ENCODE measurements at regions of chr1 and their contacts with region 1.

Region 1: DNA sequence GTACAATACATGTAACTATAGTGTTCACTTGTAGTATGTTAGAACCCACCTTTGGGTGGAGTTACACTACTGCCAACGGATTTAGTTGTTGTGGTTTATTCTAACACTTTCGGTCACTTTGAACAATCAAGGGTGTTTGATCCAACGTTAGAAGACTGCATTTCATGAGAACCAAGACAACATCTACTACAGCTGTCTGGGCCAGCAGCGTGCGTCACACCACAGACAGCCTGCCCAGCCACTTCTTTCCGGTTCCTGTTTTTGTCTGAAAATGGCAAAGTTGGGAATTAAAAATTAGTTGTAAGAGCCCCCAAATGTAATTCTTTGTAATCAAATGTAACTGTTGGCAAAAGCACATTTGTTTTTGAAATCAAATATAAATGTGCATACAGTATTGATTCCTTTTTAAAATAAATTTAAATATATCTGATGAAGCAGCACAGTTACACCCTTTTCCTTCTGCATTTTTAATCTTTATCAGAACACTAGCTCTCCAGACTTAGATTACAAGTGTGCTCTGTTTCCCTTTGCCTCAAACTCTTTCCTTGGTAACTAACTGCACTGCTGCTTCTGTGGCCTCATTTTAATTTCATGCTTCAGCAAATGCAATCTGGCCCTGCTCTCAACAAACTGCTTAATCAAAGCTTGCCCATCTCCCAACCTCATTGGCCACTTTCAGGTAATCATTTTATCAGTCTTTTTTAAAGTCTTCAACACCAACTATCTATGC is 86.6 kb upstream of the DPH5 start:
- DNase-seq: peak; percentile 90
- H3K4me3 Mint-ChIP-seq: peak overlapping the region; percentile 58
- H3K27ac Mint-ChIP-seq: peak overlapping the region; percentile 91
- H3K4me1 Mint-ChIP-seq: peaks cover 53% of the 10 kb centered on the region
- H3K27me3 Mint-ChIP-seq: no peaks in the 10 kb centered on the region

Region 2: GRCh38 chr1:101122452-101123166 is 10.4 kb after region 1 on chr1:
- intact Hi-C with region 1: loop called (anchors 1 kb)
- DNase-seq: no peak
- H3K4me3 Mint-ChIP-seq: peak overlapping the region; percentile 41
- H3K27ac Mint-ChIP-seq: peak overlapping the region; percentile 52
- H3K4me1 Mint-ChIP-seq: peaks cover 34% of the 10 kb centered on the region
- H3K27me3 Mint-ChIP-seq: no peaks in the 10 kb centered on the region

Region 3: DNA sequence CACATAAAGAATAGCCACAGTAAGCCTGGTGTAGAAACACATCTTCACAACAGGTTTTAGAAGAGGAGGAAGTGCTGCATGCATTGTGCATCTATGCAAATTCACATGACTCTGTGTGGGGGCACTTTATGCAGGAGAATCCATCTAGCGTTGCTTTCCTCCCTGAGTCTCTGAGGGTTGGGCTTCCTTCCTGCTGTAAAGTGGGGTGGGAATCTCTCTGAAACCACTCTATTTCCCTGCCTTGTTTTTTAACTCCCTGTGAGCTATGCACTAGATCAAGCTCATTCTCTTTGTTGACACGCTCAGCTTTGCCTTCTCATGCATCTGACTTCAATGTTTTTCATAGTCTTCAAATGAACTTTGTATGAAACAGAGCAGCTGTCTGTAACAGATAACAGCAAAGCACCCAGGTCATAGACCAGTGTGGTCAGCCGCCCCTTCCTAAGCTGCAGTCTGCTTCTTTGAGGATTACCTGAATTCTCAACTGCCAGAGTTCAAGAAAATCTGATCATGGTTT is 16.1 kb after region 1 on chr1:
- intact Hi-C with region 1: loop called (anchors 2 kb)
- DNase-seq: peak; percentile 76
- H3K4me3 Mint-ChIP-seq: peak overlapping the region; percentile 75
- H3K27ac Mint-ChIP-seq: peak overlapping the region; percentile 61
- H3K4me1 Mint-ChIP-seq: peaks cover 48% of the 10 kb centered on the region
- H3K27me3 Mint-ChIP-seq: no peaks in the 10 kb centered on the region

Measured in activated CD4-positive, alpha-beta T cell treated with anti-CD3 and anti-CD28 coated beads, Interleukin-2, amount 10 ng/mL, durations not matched to agents 24 days and 14 days (primary cell).